ENCODE measurements at regions of chr5 and their contacts with region 1.

Region 1: GRCh38 chr5:126499853-126500342 is 76.7 kb downstream of the GRAMD2B start:
- DNase-seq: no peak
- H3K4me3 ChIP-seq: no peak overlapping the region
- H3K27ac ChIP-seq: no peak overlapping the region
- H3K27me3 ChIP-seq: no peaks in the 10 kb centered on the region
- CTCF ChIP-seq: peak; percentile 50

Region 2: DNA sequence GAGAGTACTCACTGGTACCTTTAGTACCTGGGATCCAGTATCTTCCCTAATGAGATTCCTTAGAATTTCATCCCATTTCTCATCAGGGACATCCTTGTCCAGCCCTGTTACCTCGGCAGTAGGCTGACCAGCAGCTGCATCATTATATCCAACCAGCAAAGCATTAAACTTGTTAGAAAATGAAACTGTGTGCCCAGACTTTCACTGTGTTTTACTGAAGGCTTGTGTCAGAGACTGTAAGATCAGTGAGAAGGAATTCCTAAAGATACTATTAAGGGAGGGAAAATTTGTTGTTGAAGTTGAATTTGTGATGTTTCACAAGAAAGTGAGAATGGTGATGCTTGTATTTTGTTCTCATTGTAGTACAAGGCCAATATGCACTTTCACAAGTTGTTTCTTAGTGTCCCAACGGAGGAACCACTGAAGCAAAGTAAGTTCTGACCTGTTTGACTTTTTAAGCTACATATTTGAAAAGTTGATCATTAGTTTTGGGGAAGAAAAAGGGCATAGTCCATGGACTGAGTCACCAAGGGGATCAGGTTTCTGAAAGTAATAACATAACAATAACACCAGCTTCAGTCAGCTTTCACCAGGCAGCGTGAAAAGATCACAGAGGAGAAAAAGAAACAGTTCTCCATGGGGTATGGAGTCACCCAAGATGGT is 27.9 kb before region 1 on chr5:
- CTCF ChIA-PET with region 1: interaction called, 11 read pairs
- POLR2A ChIA-PET with region 1: no interaction called
- DNase-seq: peak; percentile 42
- H3K4me3 ChIP-seq: no peak overlapping the region; the same call in 1 of the 2 replicates
- H3K27ac ChIP-seq: peak overlapping the region; percentile 58
- H3K27me3 ChIP-seq: no peaks in the 10 kb centered on the region
- CTCF ChIP-seq: no peak

Region 3: DNA sequence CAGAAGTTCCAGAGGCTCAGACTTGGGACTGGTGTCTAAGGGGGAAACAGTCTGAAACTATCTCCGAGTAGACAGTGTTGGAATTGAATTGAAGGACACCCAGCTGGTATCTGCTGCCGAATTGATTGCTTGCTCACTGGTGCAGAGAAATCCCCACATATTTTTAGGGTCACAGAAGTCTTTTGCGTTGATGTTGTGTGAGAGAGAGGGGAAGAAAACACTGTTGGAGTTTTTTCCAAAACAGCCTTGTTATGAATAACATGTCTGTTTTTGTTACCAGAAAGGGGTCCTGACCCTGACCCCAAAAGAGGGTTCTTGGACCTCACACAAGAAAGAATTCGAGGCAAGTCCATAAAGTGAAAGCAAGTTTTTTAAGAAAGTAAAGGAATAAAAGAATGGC is 13.8 kb after region 1 on chr5:
- CTCF ChIA-PET with region 1: interaction called, 10 read pairs
- POLR2A ChIA-PET with region 1: no interaction called
- DNase-seq: no peak
- H3K4me3 ChIP-seq: no peak overlapping the region
- H3K27ac ChIP-seq: no peak overlapping the region
- H3K27me3 ChIP-seq: no peaks in the 10 kb centered on the region
- CTCF ChIP-seq: no peak

Measured in AG04450 (cell line).